ENCODE measurements at regions of chr3 and their contacts with region 1.

Region 1: GRCh38 chr3:42101048-42101447 is 9.9 kb downstream of the TRAK1 start:
- DNase-seq: no peak
- ATAC-seq: no peak
- H3K4me3 ChIP-seq: no peak overlapping the region
- H3K4me3 Mint-ChIP-seq: no peak overlapping the region
- H3K27ac ChIP-seq: no peak overlapping the region
- H3K27ac Mint-ChIP-seq: no peak overlapping the region
- H3K4me1 ChIP-seq: no peaks in the 10 kb centered on the region
- H3K4me1 Mint-ChIP-seq: peaks cover 11% of the 10 kb centered on the region
- H3K27me3 ChIP-seq: no peaks in the 10 kb centered on the region
- H3K27me3 Mint-ChIP-seq: no peaks in the 10 kb centered on the region
- CTCF ChIP-seq: no peak

Region 2: GRCh38 chr3:41881233-41881821 is 219.7 kb before region 1 on chr3:
- CTCF ChIA-PET with region 1: interaction called, 32 read pairs
- POLR2A ChIA-PET with region 1: no interaction called
- intact Hi-C with region 1: no loop called
- DNase-seq: peak in 3 of 9 experiments; percentile 13 to 62 (median 52)
- ATAC-seq: no peak
- H3K4me3 ChIP-seq: no peak overlapping the region
- H3K4me3 Mint-ChIP-seq: no peak overlapping the region
- H3K27ac ChIP-seq: no peak overlapping the region
- H3K27ac Mint-ChIP-seq: no peak overlapping the region
- H3K4me1 ChIP-seq: no peaks in the 10 kb centered on the region
- H3K4me1 Mint-ChIP-seq: no peaks in the 10 kb centered on the region
- H3K27me3 ChIP-seq: no peaks in the 10 kb centered on the region
- H3K27me3 Mint-ChIP-seq: no peaks in the 10 kb centered on the region
- CTCF ChIP-seq: peak; percentile 82

Region 3: DNA sequence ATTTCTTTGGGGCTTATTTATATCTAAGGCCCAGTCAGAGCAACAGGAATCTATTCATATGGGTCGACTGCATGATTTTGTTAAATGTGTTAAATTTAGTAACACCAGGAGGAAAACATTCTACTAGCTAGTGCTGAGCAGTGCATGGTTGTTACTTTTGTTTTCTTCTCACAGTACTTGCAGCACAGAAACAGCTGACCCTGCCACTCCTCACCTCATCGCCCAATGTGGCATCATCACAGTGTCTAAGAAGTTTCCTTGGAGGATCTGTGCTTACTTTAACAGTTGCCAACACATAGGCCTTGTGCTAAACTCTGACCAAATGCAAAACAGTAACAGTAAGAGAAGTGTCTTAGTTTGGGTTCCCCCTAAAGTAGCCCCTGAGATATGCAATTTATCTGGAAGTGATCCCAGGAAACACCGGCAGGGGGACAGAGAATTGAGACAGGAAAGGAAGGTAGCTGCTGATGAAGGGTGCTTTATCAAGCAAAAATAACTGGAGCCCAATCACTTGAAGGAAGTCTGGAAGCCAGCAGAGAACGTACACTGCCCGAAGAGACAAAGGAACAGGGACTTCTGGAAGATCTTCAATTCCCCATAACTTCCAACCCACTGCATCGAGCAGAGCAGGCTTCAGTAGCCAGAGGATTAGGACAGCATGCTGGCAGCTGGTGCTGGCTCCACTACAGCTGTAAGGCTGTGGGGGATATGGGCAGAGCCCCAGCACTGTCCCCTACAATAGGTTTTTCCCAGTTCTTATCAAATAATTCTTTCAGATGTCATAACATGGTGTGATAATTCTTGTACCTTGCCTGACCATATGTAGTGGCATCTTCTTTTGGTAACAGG is 103.1 kb before region 1 on chr3:
- CTCF ChIA-PET with region 1: interaction called, 7 read pairs
- POLR2A ChIA-PET with region 1: no interaction called
- intact Hi-C with region 1: loop called in 1 of 2 experiments (anchors 5 kb)
- DNase-seq: peak in 1 of 9 experiments; percentile 19
- ATAC-seq: no peak
- H3K4me3 ChIP-seq: no peak overlapping the region
- H3K4me3 Mint-ChIP-seq: no peak overlapping the region
- H3K27ac ChIP-seq: no peak overlapping the region
- H3K27ac Mint-ChIP-seq: no peak overlapping the region
- H3K4me1 ChIP-seq: no peaks in the 10 kb centered on the region
- H3K4me1 Mint-ChIP-seq: no peaks in the 10 kb centered on the region
- H3K27me3 ChIP-seq: no peaks in the 10 kb centered on the region
- H3K27me3 Mint-ChIP-seq: peaks cover 3% of the 10 kb centered on the region
- CTCF ChIP-seq: no peak

Region 4: GRCh38 chr3:42071904-42072592 is 29.0 kb before region 1 on chr3:
- CTCF ChIA-PET with region 1: interaction called, 17 read pairs
- POLR2A ChIA-PET with region 1: no interaction called
- intact Hi-C with region 1: no loop called
- DNase-seq: no peak
- ATAC-seq: no peak
- H3K4me3 ChIP-seq: no peak overlapping the region
- H3K4me3 Mint-ChIP-seq: no peak overlapping the region
- H3K27ac ChIP-seq: no peak overlapping the region
- H3K27ac Mint-ChIP-seq: no peak overlapping the region
- H3K4me1 ChIP-seq: peaks cover 4% of the 10 kb centered on the region
- H3K4me1 Mint-ChIP-seq: peaks cover 34% of the 10 kb centered on the region
- H3K27me3 ChIP-seq: no peaks in the 10 kb centered on the region
- H3K27me3 Mint-ChIP-seq: no peaks in the 10 kb centered on the region
- CTCF ChIP-seq: no peak

Region 5: DNA sequence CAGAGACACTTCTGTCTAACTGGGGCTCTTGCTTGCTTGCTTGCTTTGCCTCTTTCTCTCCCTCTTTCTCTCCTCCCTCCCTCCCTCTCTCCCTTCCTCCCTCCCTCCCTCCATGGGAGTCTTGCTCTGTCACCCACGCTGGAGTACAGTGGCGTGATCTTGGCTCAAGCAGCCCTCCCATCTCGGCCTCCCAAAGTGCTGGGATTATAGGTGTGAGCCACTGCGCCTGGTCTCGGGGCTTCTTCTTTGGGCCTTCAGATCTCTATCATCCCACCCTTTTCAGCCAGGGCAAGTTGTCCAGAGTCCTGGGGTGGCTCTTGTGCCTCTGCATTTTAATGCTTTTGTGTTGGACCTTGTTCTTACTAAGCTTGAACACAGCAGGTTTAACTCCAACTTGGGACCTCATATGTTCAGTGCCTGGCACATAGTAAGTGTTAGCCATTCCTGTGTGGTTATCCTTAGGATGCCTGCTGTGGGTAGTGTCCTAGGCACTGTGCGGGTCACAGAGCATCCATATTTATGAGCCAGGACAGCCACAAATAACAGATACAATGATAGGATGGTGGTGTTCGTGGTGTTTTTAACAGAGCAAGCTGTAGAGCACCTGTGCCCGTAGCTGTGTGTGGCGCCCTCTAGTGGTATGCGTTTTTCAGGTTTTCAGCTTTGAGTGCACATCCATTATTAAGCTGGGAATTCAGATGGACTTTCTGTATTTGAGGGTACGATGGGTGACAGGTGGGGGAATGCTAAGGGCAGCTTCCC is 89.8 kb after region 1 on chr3:
- CTCF ChIA-PET with region 1: interaction called, 4 read pairs
- POLR2A ChIA-PET with region 1: no interaction called
- intact Hi-C with region 1: loop called in 1 of 2 experiments (anchors 5 kb)
- DNase-seq: peak; percentile 44 to 84 (median 72)
- ATAC-seq: peak; percentile 61
- H3K4me3 ChIP-seq: no peak overlapping the region
- H3K4me3 Mint-ChIP-seq: no peak overlapping the region
- H3K27ac ChIP-seq: no peak overlapping the region
- H3K27ac Mint-ChIP-seq: no peak overlapping the region
- H3K4me1 ChIP-seq: peaks cover 15% of the 10 kb centered on the region
- H3K4me1 Mint-ChIP-seq: peaks cover 12% of the 10 kb centered on the region
- H3K27me3 ChIP-seq: no peaks in the 10 kb centered on the region
- H3K27me3 Mint-ChIP-seq: no peaks in the 10 kb centered on the region
- CTCF ChIP-seq: peak; percentile 90

Measured in CD8-positive, alpha-beta T cell (primary cell).